HepG2 (cell line): ENCODE measurements at regions of chr2 and their contacts with region 1.

Region 1: DNA sequence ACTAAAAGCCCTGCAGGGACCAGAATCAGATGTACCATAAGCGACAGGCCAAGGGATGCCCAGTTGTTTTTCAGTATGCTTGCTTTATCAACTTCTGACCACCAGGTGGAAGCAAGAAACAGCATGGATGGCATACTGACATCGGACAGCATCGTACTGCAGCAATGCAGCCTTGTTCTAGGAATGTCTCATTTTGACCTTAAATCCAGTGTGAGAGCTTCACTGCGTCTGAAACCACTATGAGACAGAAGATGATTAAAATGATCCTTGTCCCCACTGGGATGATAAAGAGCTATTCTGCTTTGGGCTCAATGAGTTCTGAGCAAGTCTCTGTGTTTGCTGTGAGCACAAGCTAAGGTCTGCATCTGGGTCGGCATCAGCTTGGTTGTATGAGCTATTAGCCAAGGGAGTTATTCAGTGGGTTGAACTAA is 54.3 kb downstream of the CDK15 start:
- DNase-seq: peak; percentile 69
- ATAC-seq: peak; percentile 98
- H3K4me3 ChIP-seq: no peak overlapping the region
- H3K27ac ChIP-seq: no peak overlapping the region
- H3K4me1 ChIP-seq: no peaks in the 10 kb centered on the region
- H3K27me3 ChIP-seq: peaks cover 3 to 11% of the 10 kb centered on the region in 2 experiments; a peak in 3 of 5 replicates
- CTCF ChIP-seq: peak; percentile 95
- EP300 ChIP-seq: no peak
- POLR2A ChIP-seq: no peak
- RAD21 ChIP-seq: peak; percentile 88

Region 2: GRCh38 chr2:201890457-201890856 is 29.8 kb after region 1 on chr2:
- CTCF ChIA-PET with region 1: no interaction called
- POLR2A ChIA-PET with region 1: no interaction called
- in situ Hi-C with region 1: no loop called
- intact Hi-C with region 1: no loop called
- DNase-seq: no peak
- ATAC-seq: no peak
- H3K4me3 ChIP-seq: no peak overlapping the region
- H3K27ac ChIP-seq: no peak overlapping the region
- H3K4me1 ChIP-seq: no peaks in the 10 kb centered on the region
- H3K27me3 ChIP-seq: peaks cover 0 to 14% of the 10 kb centered on the region in 2 experiments; a peak in 1 of 5 replicates
- CTCF ChIP-seq: no peak
- EP300 ChIP-seq: no peak
- POLR2A ChIP-seq: no peak
- RAD21 ChIP-seq: no peak

Region 3: GRCh38 chr2:202056392-202057010 is 195.8 kb after region 1 on chr2:
- CTCF ChIA-PET with region 1: no interaction called
- POLR2A ChIA-PET with region 1: no interaction called
- in situ Hi-C with region 1: no loop called
- intact Hi-C with region 1: loop called (anchors 1 kb)
- DNase-seq: no peak
- ATAC-seq: peak; percentile 56
- H3K4me3 ChIP-seq: no peak overlapping the region
- H3K27ac ChIP-seq: no peak overlapping the region
- H3K4me1 ChIP-seq: no peaks in the 10 kb centered on the region
- H3K27me3 ChIP-seq: peaks cover 0 to 2% of the 10 kb centered on the region in 2 experiments; a peak in 1 of 5 replicates
- CTCF ChIP-seq: peak; percentile 21; the same call in 1 of the 2 replicates
- EP300 ChIP-seq: no peak
- POLR2A ChIP-seq: no peak
- RAD21 ChIP-seq: no peak

Region 4: DNA sequence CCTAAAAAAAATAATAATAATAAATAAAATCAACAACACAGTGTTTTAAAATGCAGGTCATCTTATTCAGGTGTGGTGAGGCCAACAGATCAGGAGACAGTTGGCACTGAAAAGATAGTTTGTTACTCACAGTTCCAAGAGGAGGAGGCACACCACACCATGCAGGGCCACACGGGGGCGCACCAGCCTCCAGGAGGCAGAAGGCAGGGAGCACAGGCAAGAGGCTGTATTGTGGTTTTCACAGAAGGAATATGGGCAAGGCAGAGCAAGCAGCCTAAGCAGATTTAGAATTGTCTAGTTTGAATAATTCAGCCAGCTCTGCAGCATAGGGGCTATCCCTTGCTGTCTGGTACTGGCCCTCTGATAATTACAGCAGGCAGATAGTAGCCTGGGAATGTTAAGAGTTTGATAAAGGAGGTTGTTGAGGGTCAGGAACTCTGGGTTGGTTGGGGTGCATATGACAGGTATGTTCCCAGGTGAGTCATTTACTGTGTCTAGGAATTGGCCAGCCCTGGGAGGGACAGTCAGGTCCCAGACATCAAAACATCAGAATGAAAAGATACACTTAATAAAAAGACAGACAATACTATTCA is 243.7 kb after region 1 on chr2:
- CTCF ChIA-PET with region 1: interaction called, 3 read pairs
- POLR2A ChIA-PET with region 1: no interaction called
- in situ Hi-C with region 1: no loop called
- intact Hi-C with region 1: loop called (anchors 2 kb)
- DNase-seq: peak; percentile 36
- ATAC-seq: peak; percentile 95
- H3K4me3 ChIP-seq: no peak overlapping the region
- H3K27ac ChIP-seq: no peak overlapping the region
- H3K4me1 ChIP-seq: no peaks in the 10 kb centered on the region
- H3K27me3 ChIP-seq: peaks cover 0 to 8% of the 10 kb centered on the region in 2 experiments; a peak in 1 of 5 replicates
- CTCF ChIP-seq: peak; percentile 87
- EP300 ChIP-seq: no peak
- POLR2A ChIP-seq: no peak
- RAD21 ChIP-seq: peak; percentile 65

Region 5: GRCh38 chr2:202172439-202173211 is 312.0 kb after region 1 on chr2:
- CTCF ChIA-PET with region 1: interaction called, 44 read pairs
- POLR2A ChIA-PET with region 1: no interaction called
- in situ Hi-C with region 1: loop called (anchors 5 kb)
- intact Hi-C with region 1: no loop called
- DNase-seq: no peak
- ATAC-seq: peak; percentile 43; the same call in 2 of the 3 replicates
- H3K4me3 ChIP-seq: no peak overlapping the region; a peak in 1 of 6 replicates
- H3K27ac ChIP-seq: no peak overlapping the region
- H3K4me1 ChIP-seq: no peaks in the 10 kb centered on the region
- H3K27me3 ChIP-seq: no peaks in the 10 kb centered on the region; a peak in 1 of 5 replicates
- CTCF ChIP-seq: no peak
- EP300 ChIP-seq: no peak
- POLR2A ChIP-seq: no peak
- RAD21 ChIP-seq: no peak